ENCODE measurements at regions of chr10 and their contacts with region 1.

Region 1: DNA sequence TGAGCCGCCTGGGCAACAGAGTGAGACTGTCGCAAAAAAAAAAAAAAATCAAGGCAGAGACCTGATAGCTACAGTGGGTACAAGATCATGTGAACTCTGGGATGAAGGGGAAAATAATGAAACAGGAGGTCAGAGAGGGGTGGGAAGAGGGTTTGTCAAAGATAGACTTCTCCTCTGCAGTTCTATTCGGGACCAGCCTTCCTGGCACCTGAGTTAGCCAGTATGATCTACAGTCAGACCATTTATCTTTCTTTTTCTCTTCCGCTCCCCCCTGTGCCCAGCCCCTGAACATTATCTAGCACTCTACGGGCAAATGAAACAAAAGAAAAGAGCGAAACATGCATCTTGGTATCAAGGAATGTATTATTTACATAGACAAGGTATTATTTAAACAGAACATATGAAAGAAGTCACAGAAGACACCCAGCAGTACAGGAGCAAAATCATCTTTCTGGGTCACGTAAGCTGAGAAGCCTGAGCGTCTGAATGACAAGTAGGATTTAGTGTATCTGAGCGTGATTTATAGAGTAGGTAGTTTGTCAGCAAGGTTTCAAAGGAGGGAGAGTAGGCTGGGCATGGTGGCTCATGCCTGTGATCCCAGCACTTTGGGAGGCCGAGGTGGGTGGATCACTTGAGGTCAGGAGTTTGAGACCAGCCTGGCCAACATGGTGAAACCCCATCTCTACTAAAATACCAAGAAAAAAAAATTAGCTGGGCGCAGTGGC is 109.0 kb downstream of the PRKCQ start:
- DNase-seq: no peak
- ATAC-seq: no peak
- H3K4me3 ChIP-seq: no peak overlapping the region
- H3K27ac ChIP-seq: no peak overlapping the region
- H3K4me1 ChIP-seq: no peaks in the 10 kb centered on the region
- H3K27me3 ChIP-seq: no peaks in the 10 kb centered on the region
- CTCF ChIP-seq: no peak
- POLR2A ChIP-seq: no peak
- RAD21 ChIP-seq: no peak

Region 2: DNA sequence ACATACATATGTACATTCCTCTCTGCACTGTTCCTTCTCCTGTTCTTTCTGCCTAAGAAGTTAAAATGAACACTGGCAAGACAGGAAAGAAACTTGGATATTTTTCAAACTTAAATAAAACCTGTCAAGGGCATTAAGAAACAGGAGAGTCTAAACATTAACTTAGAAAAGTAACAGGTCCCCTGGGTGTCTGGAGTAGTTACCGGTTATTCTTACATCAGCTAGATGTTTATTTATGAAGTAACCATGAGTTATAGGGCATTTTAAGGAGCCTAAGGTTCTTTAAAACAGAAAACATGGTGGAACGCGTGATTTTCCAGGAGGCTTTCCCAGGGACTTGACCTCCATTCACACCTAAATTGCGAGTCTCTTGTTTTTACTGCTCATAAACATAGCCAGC is 39.2 kb before region 1 on chr10:
- CTCF ChIA-PET with region 1: no interaction called
- POLR2A ChIA-PET with region 1: no interaction called
- dilution Hi-C with region 1: no loop called
- in situ Hi-C with region 1: no loop called
- intact Hi-C with region 1: loop called (anchors 1 kb)
- DNase-seq: no peak
- ATAC-seq: no peak
- H3K4me3 ChIP-seq: no peak overlapping the region
- H3K27ac ChIP-seq: no peak overlapping the region
- H3K4me1 ChIP-seq: no peaks in the 10 kb centered on the region
- H3K27me3 ChIP-seq: peaks cover 17% of the 10 kb centered on the region
- CTCF ChIP-seq: no peak
- POLR2A ChIP-seq: no peak
- RAD21 ChIP-seq: no peak

Region 3: DNA sequence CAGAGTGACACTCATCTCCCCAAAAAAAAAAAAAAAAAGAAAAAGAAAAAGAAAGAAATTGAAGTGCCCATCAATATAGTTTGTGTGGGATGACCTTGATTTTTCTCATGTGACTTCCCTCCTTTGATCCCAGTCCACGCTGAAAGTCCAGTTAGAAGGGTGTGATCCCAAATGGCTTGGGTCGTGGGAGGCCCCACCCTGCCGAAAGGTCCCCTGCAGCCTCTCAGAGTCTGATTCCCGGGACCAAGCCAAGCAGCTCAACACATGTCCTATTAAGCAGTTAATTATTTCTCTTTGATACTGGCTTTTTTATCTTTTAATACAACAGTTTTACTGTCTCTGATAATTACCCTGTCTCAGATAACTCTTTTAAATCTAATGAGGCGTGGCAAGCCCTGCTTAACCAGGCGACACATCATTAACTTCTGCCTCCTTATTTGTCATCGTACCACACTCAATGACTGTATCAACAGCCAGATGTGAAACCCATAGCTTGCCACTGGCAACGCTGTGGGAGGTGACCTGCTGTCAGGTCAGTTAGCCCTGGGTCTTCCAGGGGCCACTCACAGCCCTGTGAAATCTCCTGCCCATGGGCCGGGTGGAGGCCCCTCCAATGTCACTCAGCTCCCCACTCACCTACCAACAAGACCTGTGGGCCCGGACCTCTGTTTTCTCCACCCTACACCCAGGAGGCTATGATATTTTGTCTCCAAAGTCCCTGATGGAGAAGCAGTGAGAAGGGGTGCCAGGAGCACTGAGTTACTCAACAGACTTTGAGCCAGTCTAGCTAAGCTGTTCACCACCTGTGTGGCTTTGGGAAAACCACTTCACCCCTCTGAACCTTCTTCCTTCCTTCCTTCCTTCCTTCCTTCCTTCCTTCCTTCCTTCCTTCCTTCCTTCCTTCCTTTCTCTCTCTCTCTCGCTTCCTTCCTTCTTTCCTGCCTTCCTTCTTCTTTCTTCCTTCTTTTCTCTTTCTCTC is 1049.7 kb after region 1 on chr10:
- CTCF ChIA-PET with region 1: no interaction called
- POLR2A ChIA-PET with region 1: no interaction called
- dilution Hi-C with region 1: no loop called
- in situ Hi-C with region 1: no loop called
- intact Hi-C with region 1: no loop called
- DNase-seq: no peak
- ATAC-seq: no peak
- H3K4me3 ChIP-seq: no peak overlapping the region
- H3K27ac ChIP-seq: no peak overlapping the region
- H3K4me1 ChIP-seq: no peaks in the 10 kb centered on the region
- H3K27me3 ChIP-seq: peaks cover 1% of the 10 kb centered on the region; the same call in 1 of the 2 replicates
- CTCF ChIP-seq: no peak
- POLR2A ChIP-seq: no peak
- RAD21 ChIP-seq: no peak